ENCODE measurements at regions of chr9 and their contacts with region 1.

Region 1: GRCh38 chr9:114681594-114682332 is at the start of gene TEX48:
- DNase-seq: no peak
- ATAC-seq: peak; percentile 94
- H3K4me3 ChIP-seq: no peak within 1 kb of the TSS
- H3K27ac ChIP-seq: no peak within 1 kb of the TSS
- H3K4me1 ChIP-seq: no peaks in the 10 kb centered on the region
- H3K27me3 ChIP-seq: no peaks in the 10 kb centered on the region
- CTCF ChIP-seq: peak; percentile 76
- total RNA-seq, gene TEX48: not detected

Region 2: GRCh38 chr9:114906908-114907571 is 225.3 kb after region 1 on chr9:
- CTCF ChIA-PET with region 1: interaction called, 3 read pairs
- POLR2A ChIA-PET with region 1: no interaction called
- in situ Hi-C with region 1: no loop called
- intact Hi-C with region 1: loop called (anchors 1 kb)
- DNase-seq: no peak
- ATAC-seq: no peak; the same call in 1 of the 2 replicates
- H3K4me3 ChIP-seq: no peak overlapping the region
- H3K27ac ChIP-seq: no peak overlapping the region
- H3K4me1 ChIP-seq: no peaks in the 10 kb centered on the region
- H3K27me3 ChIP-seq: no peaks in the 10 kb centered on the region
- CTCF ChIP-seq: peak; percentile 21; the same call in 1 of the 2 replicates

Region 3: DNA sequence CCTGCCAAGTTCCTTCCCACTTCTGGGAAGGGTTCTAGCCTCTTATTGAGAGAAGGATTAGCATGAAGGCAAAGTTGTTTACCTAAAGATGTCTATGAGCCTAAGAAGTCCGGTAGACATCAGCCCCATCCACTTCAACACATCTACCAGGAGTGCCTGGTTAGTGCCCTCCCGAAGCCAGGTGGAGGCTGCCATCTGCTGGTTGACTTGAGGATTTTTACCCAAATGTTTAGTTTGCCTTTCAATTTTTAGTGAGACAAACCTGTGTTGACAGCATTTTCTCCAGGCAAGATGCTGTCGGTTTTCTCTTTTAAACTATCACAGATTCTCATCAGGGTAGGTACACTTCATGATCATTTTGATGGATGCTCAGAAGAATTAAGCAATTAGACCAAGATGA is 332.2 kb after region 1 on chr9:
- CTCF ChIA-PET with region 1: interaction called, 3 read pairs
- POLR2A ChIA-PET with region 1: no interaction called
- in situ Hi-C with region 1: no loop called
- intact Hi-C with region 1: loop called (anchors 1 kb)
- DNase-seq: no peak
- ATAC-seq: peak; percentile 85
- H3K4me3 ChIP-seq: no peak overlapping the region
- H3K27ac ChIP-seq: no peak overlapping the region
- H3K4me1 ChIP-seq: no peaks in the 10 kb centered on the region
- H3K27me3 ChIP-seq: no peaks in the 10 kb centered on the region
- CTCF ChIP-seq: peak; percentile 72